Right ventricle myocardium superior (tissue), 1 donor: ENCODE measurements at regions of chr5 and their contacts with region 1.

Region 1: DNA sequence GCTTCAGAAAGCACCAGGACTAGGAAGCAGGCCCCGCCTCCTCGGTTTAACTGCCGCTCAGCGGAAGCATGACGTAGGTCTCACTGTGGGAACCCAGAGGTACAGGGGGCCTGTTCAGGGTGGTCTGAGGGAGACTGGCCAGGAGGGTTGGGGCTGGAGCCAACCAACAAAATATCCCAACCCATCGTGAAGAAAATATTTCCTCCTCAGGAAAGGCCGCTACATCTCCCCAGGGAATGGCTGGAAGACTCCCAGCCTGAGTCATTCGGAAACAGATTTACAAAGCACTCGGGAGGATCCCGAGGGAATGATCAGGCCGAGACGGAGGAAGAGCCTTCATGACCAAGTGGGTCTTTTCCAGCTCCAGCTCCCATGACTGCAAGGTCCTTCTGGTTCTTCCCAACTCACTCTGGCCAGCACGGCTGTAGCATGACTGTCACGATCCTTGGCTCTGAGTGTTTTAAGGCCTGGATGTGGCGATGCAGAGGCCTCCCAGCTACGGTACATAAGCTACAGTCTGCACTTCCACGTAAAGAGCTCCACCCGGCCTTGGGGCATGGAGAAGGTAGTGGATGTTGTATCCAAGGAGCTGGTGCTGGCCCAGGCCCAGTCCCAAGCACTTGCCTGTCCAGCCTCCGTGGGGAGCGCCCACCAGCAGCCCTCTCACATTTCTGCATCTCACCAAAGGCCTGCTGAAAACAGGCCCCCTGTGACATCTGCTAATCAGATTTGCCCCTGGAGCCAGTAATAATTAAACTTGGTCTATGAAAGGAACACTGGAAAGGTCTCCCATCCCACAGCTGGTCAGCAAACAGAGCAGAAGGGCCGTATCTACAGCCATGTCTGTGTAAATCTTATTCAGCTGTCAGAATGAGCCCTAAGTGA is 100.6 kb downstream of the LHFPL2 start:
- DNase-seq: peak; percentile 91
- ATAC-seq: peak; percentile 90

Region 2: GRCh38 chr5:78008356-78008967 is 539.5 kb before region 1 on chr5:
- intact Hi-C with region 1: no loop called
- DNase-seq: no peak
- ATAC-seq: peak; percentile 69

Region 3: DNA sequence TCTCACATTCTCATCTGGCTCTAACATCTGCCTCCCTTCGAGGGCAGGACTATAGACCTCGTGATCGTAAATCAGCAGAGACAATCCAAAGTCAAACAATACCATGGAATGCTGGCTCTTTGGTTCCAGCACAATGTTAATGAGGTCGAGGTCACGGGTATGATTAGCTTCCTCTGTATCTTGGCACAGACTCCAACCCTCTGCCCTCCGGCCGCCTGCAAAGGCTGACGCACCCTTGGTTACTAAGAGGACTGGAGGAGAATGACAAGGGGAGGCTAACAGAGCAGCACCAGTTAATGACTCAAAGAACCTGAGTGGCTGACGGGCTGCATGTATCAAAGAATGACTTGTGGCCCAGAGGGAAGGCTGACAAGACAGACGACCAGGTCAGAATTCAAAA is 90.5 kb after region 1 on chr5:
- intact Hi-C with region 1: loop called (anchors 10 kb)
- DNase-seq: peak; percentile 68
- ATAC-seq: peak; percentile 88

Region 4: DNA sequence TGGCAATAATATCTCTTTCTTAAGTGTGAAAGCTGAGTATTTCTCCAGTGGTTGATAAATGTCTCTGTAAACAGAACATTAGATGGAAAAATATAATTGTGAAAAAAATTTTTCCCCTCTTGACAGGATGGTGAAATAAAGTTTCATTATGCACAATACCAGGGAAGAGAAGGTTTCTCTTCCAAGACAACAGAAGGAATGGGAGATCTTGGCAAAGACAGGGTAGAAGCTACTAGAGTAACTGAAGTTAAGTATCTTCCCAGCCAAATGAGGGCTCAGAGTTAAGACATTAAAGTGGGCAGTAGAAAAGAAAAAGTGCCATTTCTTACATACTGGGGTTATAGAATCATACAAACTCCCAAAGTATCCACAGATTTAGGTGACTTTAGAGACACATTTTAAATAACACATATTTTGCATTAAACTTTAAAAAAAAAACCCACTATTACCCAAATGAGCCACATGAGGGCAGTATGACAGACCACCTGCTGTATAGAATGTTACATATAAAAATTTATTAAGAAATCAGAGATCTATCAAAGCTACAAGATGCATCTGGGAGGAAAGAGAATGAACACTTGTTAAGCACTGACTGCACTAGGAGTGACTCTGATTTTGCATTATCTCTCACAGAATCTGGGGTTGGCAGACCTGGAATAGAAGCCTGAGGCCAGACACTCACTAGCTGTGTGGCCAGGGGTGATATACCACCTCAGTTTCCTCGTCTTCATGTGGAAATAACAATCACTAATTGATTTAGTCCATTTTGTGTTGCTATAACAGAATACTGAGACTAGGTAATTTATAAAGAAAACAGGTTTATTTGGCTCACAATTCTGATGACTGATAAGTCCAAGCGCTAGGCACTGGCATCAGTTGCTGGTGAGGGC is 338.6 kb after region 1 on chr5:
- intact Hi-C with region 1: loop called (anchors 10 kb)
- DNase-seq: no peak
- ATAC-seq: no peak